ENCODE measurements at regions of chr4 and their contacts with region 1.

Region 1: GRCh38 chr4:105996845-105997244 is 101.6 kb downstream of the NPNT start:
- DNase-seq: no peak
- ATAC-seq: peak in 1 of 2 donors; percentile 91

Region 2: DNA sequence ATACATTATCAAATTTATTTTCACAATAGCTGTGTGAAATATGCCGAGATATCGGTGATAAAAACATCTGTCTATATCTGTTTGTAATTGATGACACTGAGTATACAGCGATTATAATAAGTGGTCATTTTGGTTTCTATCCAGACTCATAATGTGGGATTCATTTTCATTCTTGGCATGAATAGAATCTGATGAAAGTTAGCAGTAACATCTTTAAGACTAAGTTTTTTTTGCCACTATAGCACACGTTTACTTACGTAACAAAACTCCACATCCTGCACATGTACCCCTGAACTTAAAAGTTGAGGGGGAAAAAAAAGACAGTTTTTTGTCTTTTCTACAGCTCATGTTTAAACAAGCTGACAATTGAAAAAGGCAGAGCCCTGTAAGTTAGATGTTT is 609.4 kb before region 1 on chr4:
- intact Hi-C with region 1: no loop called
- DNase-seq: no peak
- ATAC-seq: no peak

Region 3: DNA sequence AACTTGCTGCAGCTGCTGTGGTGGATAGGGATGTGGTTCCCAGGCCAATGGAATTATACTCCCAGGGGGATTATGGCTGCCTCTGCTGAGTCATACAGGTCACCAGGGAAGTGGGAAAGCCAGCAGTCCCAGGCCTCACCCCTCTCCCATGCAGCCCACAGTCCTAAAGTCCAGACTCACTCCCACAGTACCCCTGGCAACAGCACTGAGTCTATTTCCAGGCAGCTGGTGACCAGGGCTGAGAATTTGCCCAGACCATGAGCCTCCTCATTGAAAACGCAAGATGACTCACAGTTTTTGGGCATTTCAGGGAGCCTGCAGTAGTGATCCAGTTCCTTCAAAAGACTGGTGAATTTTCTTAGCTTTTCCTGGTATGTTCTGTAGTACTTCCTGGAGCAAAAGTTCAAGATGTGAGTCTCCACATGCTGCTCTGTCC is 36.0 kb after region 1 on chr4:
- intact Hi-C with region 1: loop called in 1 of 2 experiments (anchors 2 kb)
- DNase-seq: no peak
- ATAC-seq: peak in 1 of 2 donors; percentile 36